Activated B cell treated with CpG ODN at 0.5 μM for 24 hours (primary cell): ENCODE measurements at regions of chr2 and their contacts with region 1.

Region 1: GRCh38 chr2:54634564-54635511 is 88.6 kb upstream of the EML6 start:
- DNase-seq: peak; percentile 42
- ATAC-seq: peak; percentile 73
- H3K4me3 Mint-ChIP-seq: peak overlapping the region; percentile 47
- H3K27ac Mint-ChIP-seq: peak overlapping the region; percentile 97
- H3K4me1 Mint-ChIP-seq: peaks cover 59% of the 10 kb centered on the region
- H3K27me3 Mint-ChIP-seq: no peaks in the 10 kb centered on the region
- CTCF ChIP-seq: no peak

Region 2: DNA sequence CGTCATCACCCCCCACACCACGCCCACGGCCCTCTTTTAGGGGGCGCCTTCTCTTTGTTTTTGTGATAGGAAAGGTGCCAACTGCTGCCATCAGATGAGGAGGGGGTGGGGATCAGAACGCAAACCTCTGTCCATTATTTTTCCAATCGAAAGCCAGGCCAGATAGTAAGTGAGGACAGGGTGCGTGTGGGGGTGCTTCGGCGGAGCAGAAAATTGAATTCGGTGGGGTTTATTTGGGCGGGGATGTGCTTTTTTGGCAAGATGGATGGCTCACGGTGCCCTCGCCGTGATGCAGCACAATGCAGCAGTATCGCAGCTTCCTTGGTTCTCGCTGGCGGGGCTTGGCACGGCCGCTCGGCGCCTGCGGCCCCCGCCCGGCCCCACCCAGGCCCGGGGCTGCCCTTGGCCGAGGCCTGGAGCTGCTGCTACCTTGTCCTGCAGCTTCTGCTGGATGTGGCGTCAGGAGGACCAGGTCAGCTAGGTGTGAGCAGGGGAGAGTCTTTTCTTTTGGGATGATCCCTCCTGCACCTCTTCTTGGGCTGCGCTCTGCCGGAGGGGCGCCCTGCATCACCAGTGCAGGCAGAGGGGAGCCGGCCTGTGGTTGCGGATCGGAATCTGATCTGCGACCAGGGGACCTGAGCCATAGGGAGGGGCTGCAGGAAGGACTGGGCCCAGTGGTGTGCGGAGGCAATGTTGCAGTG is 177.4 kb before region 1 on chr2:
- CTCF ChIA-PET with region 1: no interaction called
- POLR2A ChIA-PET with region 1: no interaction called
- intact Hi-C with region 1: no loop called
- DNase-seq: peak; percentile 35
- ATAC-seq: peak; percentile 34
- H3K4me3 Mint-ChIP-seq: peak overlapping the region; percentile 86
- H3K27ac Mint-ChIP-seq: no peak overlapping the region
- H3K4me1 Mint-ChIP-seq: peaks cover 17% of the 10 kb centered on the region
- H3K27me3 Mint-ChIP-seq: peaks cover 38% of the 10 kb centered on the region
- CTCF ChIP-seq: no peak

Region 3: DNA sequence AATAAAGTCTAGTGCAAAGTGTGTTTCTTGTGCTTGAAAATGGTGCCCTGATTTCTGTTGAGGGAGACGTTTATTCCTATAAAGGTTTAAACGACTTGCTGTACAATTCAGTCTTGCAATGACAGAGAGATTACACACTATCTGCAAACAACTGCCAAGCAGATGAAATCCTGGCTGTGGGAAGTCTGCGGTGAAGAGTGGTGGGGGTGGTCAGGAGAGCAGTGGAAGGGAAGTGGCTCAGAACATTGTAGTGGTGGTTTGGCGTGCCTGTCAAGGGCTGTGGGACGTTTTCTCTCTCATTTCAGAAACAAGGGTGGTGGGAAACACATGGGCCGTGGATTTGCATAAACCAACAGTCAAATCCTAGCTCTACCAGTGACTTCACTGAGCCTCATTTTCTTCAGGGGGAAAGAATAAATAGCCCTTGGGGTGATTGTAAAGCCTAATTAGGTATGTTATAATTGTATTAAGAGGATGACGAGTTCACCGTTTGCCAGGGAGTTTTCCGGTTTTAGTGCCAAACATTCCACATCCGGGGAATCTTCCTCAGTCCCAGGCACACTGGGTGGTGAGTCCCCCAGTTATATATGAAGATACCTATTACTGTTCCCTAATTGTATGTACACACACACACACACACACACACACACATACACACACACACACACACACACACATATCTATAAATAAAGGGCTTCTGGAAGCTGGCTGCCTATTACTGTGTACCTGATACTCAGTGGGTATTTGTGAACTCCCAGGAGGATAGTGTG is 63.7 kb before region 1 on chr2:
- CTCF ChIA-PET with region 1: no interaction called
- POLR2A ChIA-PET with region 1: interaction called, 12 read pairs
- intact Hi-C with region 1: loop called (anchors 1 kb)
- DNase-seq: no peak
- ATAC-seq: peak; percentile 49
- H3K4me3 Mint-ChIP-seq: peak overlapping the region; percentile 52
- H3K27ac Mint-ChIP-seq: peak overlapping the region; percentile 94
- H3K4me1 Mint-ChIP-seq: peaks cover 96% of the 10 kb centered on the region
- H3K27me3 Mint-ChIP-seq: no peaks in the 10 kb centered on the region
- CTCF ChIP-seq: no peak

Region 4: GRCh38 chr2:54579684-54580620 is 54.9 kb before region 1 on chr2:
- CTCF ChIA-PET with region 1: no interaction called
- POLR2A ChIA-PET with region 1: interaction called, 12 read pairs
- intact Hi-C with region 1: no loop called
- DNase-seq: no peak
- ATAC-seq: peak; percentile 66
- H3K4me3 Mint-ChIP-seq: peak overlapping the region; percentile 77
- H3K27ac Mint-ChIP-seq: peak overlapping the region; percentile 95
- H3K4me1 Mint-ChIP-seq: peaks cover 98% of the 10 kb centered on the region
- H3K27me3 Mint-ChIP-seq: no peaks in the 10 kb centered on the region
- CTCF ChIP-seq: no peak

Region 5: GRCh38 chr2:54597153-54597848 is 37.5 kb before region 1 on chr2:
- CTCF ChIA-PET with region 1: no interaction called
- POLR2A ChIA-PET with region 1: interaction called, 3 read pairs
- intact Hi-C with region 1: loop called (anchors 5 kb)
- DNase-seq: no peak
- ATAC-seq: no peak
- H3K4me3 Mint-ChIP-seq: peak overlapping the region; percentile 60
- H3K27ac Mint-ChIP-seq: peak overlapping the region; percentile 92
- H3K4me1 Mint-ChIP-seq: peaks cover 91% of the 10 kb centered on the region
- H3K27me3 Mint-ChIP-seq: no peaks in the 10 kb centered on the region
- CTCF ChIP-seq: no peak

Region 6: DNA sequence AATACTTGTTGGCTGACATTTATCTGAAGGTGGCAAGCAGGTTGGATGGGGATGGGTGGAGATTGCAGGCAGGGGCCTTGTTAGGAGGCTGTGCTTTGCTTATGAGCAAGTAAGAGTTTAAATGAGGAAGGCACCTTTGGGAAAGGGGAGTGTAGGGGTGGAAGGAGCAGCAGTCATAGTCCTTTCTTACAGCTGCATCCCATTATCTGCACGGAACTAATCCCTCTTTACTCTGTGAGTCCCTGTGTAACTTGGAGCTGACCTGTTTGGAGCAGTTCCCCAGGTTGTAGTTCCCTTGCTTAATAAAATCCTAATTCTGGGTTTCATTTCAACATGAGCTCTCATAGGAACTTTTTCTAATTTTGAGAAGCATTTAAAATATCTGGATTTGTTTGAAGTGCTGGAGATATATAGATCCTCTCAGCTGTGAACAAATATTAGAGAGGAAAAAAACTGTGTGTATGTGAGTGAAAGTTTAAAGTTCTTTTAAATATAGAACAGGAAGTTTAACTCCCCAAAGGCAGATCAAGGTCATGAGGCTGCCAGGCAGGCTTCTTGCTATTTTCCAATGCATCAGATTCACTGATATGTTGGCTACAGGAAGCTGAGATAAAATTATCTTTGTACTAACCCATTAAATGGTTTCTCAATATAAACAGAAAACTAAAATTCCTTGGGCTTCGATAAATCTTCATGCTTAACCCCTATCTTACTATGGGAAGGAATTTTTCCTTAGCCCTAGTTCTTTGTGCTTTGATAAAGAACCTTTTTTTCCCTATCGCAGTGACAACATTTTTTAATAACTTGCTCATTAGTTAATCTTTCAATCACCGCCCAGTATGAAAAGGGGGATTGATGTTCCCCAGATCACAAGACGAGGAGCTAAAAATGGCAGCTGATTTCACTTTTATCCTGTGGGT is 15.9 kb before region 1 on chr2:
- CTCF ChIA-PET with region 1: no interaction called
- POLR2A ChIA-PET with region 1: no interaction called
- intact Hi-C with region 1: loop called (anchors 2 kb)
- DNase-seq: no peak
- ATAC-seq: peak; percentile 45
- H3K4me3 Mint-ChIP-seq: no peak overlapping the region
- H3K27ac Mint-ChIP-seq: peak overlapping the region; percentile 62
- H3K4me1 Mint-ChIP-seq: peaks cover 18% of the 10 kb centered on the region
- H3K27me3 Mint-ChIP-seq: no peaks in the 10 kb centered on the region
- CTCF ChIP-seq: no peak

Region 7: DNA sequence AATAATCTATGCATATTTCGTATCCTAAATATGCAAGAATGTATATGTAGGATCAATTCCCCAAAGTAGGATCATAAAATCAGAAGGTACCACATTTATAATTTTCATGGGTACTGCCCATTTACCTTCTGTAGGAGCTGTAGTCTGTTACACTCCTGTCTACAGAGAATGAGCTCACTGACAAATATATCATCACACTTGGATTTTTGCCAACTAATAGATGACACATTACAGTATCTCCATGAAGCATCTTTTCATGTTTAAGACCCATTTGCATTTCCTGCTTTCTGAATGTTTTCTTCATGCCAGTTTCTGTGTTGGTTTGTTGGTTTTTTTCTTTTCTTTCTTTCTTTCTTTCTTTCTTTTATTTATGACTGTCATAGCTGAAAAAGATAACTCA is 17.7 kb after region 1 on chr2:
- CTCF ChIA-PET with region 1: no interaction called
- POLR2A ChIA-PET with region 1: no interaction called
- intact Hi-C with region 1: no loop called
- DNase-seq: no peak
- ATAC-seq: no peak
- H3K4me3 Mint-ChIP-seq: no peak overlapping the region
- H3K27ac Mint-ChIP-seq: no peak overlapping the region
- H3K4me1 Mint-ChIP-seq: no peaks in the 10 kb centered on the region
- H3K27me3 Mint-ChIP-seq: no peaks in the 10 kb centered on the region
- CTCF ChIP-seq: no peak

Region 8: DNA sequence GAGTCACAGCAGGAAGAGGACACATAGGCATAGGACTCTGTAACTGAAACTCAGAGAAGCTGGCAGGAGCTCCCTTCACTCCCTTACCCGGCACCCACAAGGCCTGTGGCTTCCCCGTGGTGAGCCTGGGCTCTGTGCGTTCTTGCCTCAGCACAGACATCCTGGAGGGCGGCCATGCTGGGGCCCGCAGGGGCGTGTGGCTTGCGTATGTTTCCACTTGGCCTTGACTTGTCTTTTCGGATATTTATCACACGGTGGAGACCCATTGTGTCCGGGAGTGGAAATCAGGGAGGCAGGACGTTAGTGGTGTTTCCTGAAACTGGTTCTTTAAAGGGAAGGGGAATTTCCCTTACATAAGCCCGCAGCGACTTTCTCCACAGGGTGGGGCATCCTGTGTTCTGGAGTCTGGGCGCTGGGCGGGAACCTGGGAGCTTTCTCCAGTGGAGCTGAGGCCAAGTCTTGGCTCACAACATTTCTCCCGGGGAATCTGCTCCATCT is 38.7 kb after region 1 on chr2:
- CTCF ChIA-PET with region 1: interaction called, 3 read pairs
- POLR2A ChIA-PET with region 1: no interaction called
- intact Hi-C with region 1: loop called (anchors 5 kb)
- DNase-seq: no peak
- ATAC-seq: peak; percentile 56
- H3K4me3 Mint-ChIP-seq: peak overlapping the region; percentile 64
- H3K27ac Mint-ChIP-seq: peak overlapping the region; percentile 84
- H3K4me1 Mint-ChIP-seq: peaks cover 34% of the 10 kb centered on the region
- H3K27me3 Mint-ChIP-seq: no peaks in the 10 kb centered on the region
- CTCF ChIP-seq: no peak

Region 9: DNA sequence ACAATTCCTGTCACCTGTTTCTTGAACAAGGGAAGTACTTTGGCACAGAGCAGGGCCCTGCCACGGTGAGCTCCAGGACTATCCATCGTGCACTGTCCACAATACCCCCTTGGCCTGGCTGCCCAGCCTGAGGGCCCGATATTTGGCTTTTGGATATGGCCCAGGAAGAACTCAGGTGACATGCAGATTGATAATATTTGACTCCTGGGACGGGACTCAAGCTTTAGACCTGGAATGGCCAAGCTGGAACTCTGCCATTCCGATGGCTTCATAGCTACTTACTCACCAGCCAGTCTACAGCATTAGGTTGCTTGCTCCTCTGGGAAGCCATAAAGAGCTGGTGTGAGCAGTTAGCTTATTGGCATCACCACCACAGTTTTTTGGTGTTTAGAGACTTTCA is 115.2 kb after region 1 on chr2:
- CTCF ChIA-PET with region 1: no interaction called
- POLR2A ChIA-PET with region 1: no interaction called
- intact Hi-C with region 1: no loop called
- DNase-seq: no peak
- ATAC-seq: no peak
- H3K4me3 Mint-ChIP-seq: no peak overlapping the region
- H3K27ac Mint-ChIP-seq: no peak overlapping the region
- H3K4me1 Mint-ChIP-seq: peaks cover 2% of the 10 kb centered on the region
- H3K27me3 Mint-ChIP-seq: no peaks in the 10 kb centered on the region
- CTCF ChIP-seq: no peak